PC-3 (cell line): ENCODE measurements at regions of chr1 and their contacts with region 1.

Region 1: DNA sequence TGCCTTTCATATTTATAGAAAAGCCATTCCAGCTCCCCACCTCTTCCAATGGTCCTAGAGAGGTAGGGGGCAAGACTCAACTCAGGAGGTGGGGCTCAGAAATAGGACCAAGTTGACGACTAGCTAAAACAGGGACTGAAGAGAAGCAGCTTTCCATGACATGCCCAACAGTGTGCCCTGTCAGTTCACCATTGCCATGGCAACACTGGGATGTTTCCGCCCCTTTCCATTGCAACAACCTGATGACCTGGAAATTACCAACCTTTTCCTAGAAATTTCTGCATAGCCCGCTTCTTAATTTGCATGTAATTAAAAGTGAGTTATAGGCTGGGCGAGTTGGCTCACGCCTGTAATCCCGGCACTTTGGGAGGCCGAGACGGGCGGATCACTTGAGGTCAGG is 22.4 kb upstream of the INTS3 start:
- DNase-seq: no peak
- ATAC-seq: no peak
- H3K4me3 ChIP-seq: no peak overlapping the region
- H3K27ac ChIP-seq: no peak overlapping the region
- H3K4me1 ChIP-seq: peaks cover 9% of the 10 kb centered on the region
- H3K27me3 ChIP-seq: no peaks in the 10 kb centered on the region
- CTCF ChIP-seq: no peak

Region 2: GRCh38 chr1:153658400-153659174 is 46.9 kb before region 1 on chr1 and contains the start of gene SNAPIN:
- CTCF ChIA-PET with region 1: no interaction called
- POLR2A ChIA-PET with region 1: no interaction called
- intact Hi-C with region 1: no loop called
- DNase-seq: peak; percentile 92
- ATAC-seq: peak; percentile 93
- H3K4me3 ChIP-seq: peak within 1 kb of the TSS; percentile 89
- H3K27ac ChIP-seq: peak within 1 kb of the TSS; percentile 62
- H3K4me1 ChIP-seq: peaks cover 14% of the 10 kb centered on the region; the same call in 1 of the 2 replicates
- H3K27me3 ChIP-seq: no peaks in the 10 kb centered on the region
- CTCF ChIP-seq: no peak; the same call in 1 of the 2 replicates
- total RNA-seq, gene SNAPIN: 46.4 and 82.0 TPM in 2 replicates

Region 3: DNA sequence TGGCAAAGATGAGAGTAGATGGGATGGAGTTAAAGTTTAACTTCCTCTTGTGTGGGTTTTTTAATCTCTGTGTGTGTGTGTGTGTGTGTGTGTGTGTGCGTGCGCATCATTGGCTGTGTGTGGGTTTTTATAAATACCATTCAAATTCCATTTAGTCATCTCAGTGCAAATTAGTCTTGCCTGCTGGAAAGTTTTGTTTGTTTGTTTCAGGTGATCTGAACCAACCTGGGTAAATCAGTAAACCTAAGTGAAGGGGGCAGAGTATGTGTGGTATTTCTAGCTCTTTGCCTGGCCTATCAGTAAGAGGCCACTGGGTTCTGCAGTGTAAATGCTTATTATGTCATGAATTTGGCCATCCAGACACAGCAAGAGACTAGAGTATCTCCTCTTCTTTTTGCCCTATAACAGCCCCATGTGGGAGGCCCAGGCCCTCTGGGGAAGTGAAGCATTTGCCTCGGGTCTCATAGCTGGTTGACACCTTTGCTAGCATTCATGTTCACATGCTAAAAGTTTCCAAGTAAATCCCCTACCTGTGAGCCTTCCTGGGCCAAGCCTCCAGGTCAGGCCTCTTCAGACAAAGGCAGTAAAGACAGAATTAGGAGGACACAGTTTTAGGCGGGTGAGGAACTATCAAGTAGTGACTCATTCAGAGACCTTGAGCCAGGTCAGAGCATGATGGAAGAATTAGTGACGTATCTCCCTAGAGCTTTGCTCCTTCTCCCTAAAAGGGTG is 37.1 kb after region 1 on chr1:
- CTCF ChIA-PET with region 1: no interaction called
- POLR2A ChIA-PET with region 1: interaction called, 14 read pairs
- intact Hi-C with region 1: no loop called
- DNase-seq: no peak
- ATAC-seq: peak; percentile 22; the same call in 1 of the 2 replicates
- H3K4me3 ChIP-seq: no peak overlapping the region
- H3K27ac ChIP-seq: no peak overlapping the region
- H3K4me1 ChIP-seq: no peaks in the 10 kb centered on the region
- H3K27me3 ChIP-seq: no peaks in the 10 kb centered on the region
- CTCF ChIP-seq: no peak

Region 4: DNA sequence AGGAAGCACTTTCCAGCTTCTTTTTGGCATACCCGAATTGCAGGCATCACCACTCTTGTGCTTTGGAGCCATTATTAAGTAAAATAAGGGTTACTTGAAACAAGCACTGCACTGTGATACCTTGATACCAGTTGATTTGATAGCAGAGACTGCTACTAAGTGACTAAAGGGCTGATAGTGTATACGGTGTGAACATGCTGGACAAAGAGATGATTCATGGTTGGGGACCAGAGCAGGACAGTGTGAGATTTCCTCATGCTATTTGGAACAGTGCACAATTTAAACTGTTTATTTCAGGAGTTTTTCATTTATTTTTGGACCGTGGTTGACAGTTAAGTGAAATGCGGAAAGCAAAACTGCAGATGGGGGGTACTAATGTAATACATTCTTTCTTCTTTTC is 294.9 kb after region 1 on chr1:
- CTCF ChIA-PET with region 1: no interaction called
- POLR2A ChIA-PET with region 1: no interaction called
- intact Hi-C with region 1: no loop called
- DNase-seq: no peak
- ATAC-seq: peak; percentile 51; the same call in 1 of the 2 replicates
- H3K4me3 ChIP-seq: no peak overlapping the region
- H3K27ac ChIP-seq: no peak overlapping the region
- H3K4me1 ChIP-seq: no peaks in the 10 kb centered on the region
- H3K27me3 ChIP-seq: no peaks in the 10 kb centered on the region
- CTCF ChIP-seq: no peak